ENCODE measurements at regions of chr11 and their contacts with region 1.

Region 1: DNA sequence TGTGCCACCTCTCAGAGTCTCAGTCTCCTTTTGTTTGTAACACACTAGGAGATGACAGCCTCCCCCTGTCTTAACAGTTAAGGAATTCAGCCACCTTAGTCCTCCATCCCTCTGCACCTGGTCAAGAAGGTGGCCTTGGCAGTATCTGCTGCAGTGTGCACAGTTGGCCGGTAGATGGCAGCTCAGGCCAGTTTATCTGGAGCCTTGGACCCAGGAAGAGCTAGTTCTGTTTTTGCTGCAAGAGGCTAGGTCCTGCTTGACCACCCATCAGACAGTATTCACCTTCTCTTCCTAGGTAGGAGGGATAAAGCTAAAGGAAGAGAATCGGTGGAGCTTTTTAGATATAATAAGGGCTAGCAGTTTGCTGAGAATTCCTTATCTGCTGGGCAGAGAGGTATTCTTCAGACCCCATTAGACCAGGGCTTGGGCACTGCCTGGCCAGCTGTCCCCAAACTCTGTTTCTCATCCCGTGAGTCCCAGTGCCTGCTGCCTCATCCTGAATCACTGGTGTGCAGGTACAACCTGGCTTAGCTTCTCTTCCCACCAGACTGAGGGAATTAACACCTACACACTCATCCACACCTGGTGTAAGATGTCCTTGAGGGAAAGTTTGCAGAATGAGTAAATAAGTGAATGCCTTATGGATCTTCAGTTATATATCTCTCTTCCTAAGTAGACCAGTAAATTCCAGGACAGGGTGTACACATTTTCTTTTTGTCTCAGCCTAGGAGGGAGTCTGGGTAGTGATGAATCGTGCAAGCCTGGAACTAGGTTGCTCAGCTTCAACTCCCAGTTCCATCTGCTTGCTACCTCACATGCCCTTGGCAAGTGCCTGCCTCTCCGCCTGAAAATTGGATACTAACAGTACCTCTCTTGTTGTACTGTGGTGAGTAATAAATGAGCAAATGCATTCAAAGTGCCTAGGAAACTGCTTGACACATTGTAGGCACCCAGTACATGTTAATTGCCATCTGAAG is 70.8 kb upstream of the NARS2 start:
- DNase-seq: peak; percentile 37 to 76 (median 54)
- ATAC-seq: peak; percentile 64 to 85 (median 81)
- H3K4me3 ChIP-seq: peak overlapping the region in 1 of 12 donors; percentile 2
- H3K27ac ChIP-seq: no peak overlapping the region
- H3K4me1 ChIP-seq: no peaks in the 10 kb centered on the region
- H3K27me3 ChIP-seq: peaks cover 0 to 16% (median 0%) of the 10 kb centered on the region in 9 donors
- CTCF ChIP-seq: peak; percentile 87 to 98 (median 92)
- POLR2A ChIP-seq: no peak

Region 2: DNA sequence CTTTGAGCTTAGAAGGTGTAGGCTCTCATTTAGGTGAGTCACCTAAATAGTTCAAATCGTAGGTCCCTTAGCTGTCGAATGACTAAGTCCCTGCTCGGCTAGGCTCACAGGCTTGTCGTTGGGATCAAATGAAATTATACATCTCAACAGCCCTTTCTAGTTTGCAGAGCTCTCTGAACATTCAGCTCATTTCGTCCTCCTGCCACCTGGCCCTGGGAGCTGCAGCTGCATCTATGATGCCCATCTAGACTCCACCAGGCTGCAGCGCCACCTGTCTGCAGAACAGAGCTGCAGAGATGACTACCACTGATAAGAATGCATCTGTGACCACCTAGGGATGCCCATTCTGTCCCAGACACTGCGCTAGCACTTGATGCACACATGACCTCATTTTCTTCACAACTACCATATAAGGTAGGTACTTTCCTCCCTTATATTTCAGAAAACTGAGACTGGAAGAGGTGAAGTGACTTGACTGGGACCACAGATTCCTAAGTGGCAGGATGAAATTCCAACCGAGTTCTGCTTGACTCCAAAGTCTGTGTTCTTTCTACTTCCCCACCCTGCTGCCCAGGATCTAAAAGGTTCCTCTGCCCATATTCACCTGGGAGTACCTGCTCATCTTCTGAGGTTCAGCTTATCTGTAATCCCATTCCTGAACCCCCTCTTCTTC is 70.3 kb after region 1 on chr11:
- intact Hi-C with region 1: loop called in 3 of 10 experiments (anchors 5 to 10 kb)
- DNase-seq: no peak
- ATAC-seq: peak in 1 of 4 donors; percentile 38
- H3K4me3 ChIP-seq: no peak overlapping the region
- H3K27ac ChIP-seq: no peak overlapping the region
- H3K4me1 ChIP-seq: peaks cover 0 to 6% (median 0%) of the 10 kb centered on the region in 12 donors
- H3K27me3 ChIP-seq: no peaks in the 10 kb centered on the region
- CTCF ChIP-seq: peak in 11 of 12 donors; percentile 12 to 60 (median 42)
- POLR2A ChIP-seq: no peak

Region 3: DNA sequence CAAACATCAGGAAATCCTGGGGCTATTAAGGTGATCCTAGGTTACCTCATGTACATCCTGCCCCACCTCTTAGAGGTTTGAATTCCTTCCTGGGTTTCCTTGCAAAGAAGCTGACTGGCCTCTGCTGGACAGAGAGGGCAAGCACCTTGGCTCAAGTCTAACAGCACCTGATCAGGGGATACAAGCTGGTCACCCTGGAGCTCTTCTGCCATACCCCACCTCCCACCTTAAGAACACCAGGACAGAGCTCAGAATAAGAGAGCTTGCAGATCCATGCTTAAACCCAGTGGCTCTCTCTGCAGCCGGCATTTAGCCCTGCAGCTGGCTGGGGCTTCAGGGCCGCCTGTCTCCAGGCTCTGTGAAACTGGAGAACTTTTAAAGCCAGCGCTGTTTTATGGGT is 315.7 kb after region 1 on chr11:
- intact Hi-C with region 1: loop called in 8 of 10 experiments (anchors 2 to 10 kb)
- DNase-seq: peak in 1 of 5 donors; percentile 22
- ATAC-seq: peak in 3 of 4 donors; percentile 56 to 82 (median 68)
- H3K4me3 ChIP-seq: no peak overlapping the region
- H3K27ac ChIP-seq: no peak overlapping the region
- H3K4me1 ChIP-seq: peaks cover 0 to 10% (median under 1%) of the 10 kb centered on the region in 12 donors
- H3K27me3 ChIP-seq: peaks cover 0 to 29% (median 7%) of the 10 kb centered on the region in 9 donors
- CTCF ChIP-seq: peak in 10 of 12 donors; percentile 18 to 55 (median 43)
- POLR2A ChIP-seq: no peak

Region 4: GRCh38 chr11:79100093-79100910 is 454.8 kb after region 1 on chr11:
- intact Hi-C with region 1: loop called in 3 of 10 experiments (anchors 2 to 10 kb)
- DNase-seq: no peak
- ATAC-seq: peak in 2 of 4 donors; percentile 48 to 58
- H3K4me3 ChIP-seq: no peak overlapping the region
- H3K27ac ChIP-seq: no peak overlapping the region
- H3K4me1 ChIP-seq: peaks cover 0 to 12% (median 0%) of the 10 kb centered on the region in 12 donors
- H3K27me3 ChIP-seq: peaks cover 0 to 5% (median 0%) of the 10 kb centered on the region in 9 donors
- CTCF ChIP-seq: peak; percentile 49 to 73 (median 64)
- POLR2A ChIP-seq: no peak

Region 5: DNA sequence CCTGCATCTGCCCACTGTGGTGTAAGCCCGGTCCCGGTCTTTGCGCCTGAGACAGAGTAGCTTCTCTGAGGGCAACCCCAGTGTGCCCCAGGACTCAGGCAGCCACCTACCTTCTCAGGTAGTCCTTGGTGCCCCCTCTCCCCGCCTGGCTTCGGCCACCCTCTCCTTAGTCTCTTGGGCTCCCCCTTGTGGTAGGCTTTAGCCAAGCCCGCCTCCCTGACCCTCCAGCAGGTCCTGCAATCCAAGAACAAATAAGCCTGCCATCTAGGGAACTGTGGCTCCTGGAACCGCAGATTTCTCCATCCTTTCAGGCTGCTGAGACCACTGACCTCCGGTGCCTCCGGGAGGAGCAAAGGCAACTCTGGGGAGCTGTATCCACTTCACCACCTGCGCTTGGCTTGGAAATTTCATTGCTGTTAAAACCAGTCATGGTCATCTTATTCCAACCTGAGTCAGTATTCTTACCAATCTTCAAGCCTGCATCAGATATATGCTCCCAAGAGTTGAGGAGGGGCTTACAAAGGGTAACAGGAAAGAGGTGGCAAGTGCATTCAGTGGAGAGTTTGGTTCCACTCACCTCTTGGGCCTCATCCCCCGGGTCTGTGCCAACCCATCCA is 848.1 kb after region 1 on chr11:
- intact Hi-C with region 1: loop called in 7 of 10 experiments (anchors 5 to 10 kb)
- DNase-seq: peak; percentile 57 to 72 (median 62)
- ATAC-seq: peak in 3 of 4 donors; percentile 71 to 91 (median 83)
- H3K4me3 ChIP-seq: no peak overlapping the region
- H3K27ac ChIP-seq: no peak overlapping the region
- H3K4me1 ChIP-seq: no peaks in the 10 kb centered on the region
- H3K27me3 ChIP-seq: peaks cover 0 to 6% (median 0%) of the 10 kb centered on the region in 9 donors
- CTCF ChIP-seq: peak; percentile 74 to 89 (median 84)
- POLR2A ChIP-seq: no peak